Dendritic cell treated with granulocyte-macrophage colony-stimulating factor and Interleukin-4, amounts not matched to agents 40 ng/mL and 50 ng/mL, for 4 days (primary cell): ENCODE measurements at regions of chr9 and their contacts with region 1.

Region 1: DNA sequence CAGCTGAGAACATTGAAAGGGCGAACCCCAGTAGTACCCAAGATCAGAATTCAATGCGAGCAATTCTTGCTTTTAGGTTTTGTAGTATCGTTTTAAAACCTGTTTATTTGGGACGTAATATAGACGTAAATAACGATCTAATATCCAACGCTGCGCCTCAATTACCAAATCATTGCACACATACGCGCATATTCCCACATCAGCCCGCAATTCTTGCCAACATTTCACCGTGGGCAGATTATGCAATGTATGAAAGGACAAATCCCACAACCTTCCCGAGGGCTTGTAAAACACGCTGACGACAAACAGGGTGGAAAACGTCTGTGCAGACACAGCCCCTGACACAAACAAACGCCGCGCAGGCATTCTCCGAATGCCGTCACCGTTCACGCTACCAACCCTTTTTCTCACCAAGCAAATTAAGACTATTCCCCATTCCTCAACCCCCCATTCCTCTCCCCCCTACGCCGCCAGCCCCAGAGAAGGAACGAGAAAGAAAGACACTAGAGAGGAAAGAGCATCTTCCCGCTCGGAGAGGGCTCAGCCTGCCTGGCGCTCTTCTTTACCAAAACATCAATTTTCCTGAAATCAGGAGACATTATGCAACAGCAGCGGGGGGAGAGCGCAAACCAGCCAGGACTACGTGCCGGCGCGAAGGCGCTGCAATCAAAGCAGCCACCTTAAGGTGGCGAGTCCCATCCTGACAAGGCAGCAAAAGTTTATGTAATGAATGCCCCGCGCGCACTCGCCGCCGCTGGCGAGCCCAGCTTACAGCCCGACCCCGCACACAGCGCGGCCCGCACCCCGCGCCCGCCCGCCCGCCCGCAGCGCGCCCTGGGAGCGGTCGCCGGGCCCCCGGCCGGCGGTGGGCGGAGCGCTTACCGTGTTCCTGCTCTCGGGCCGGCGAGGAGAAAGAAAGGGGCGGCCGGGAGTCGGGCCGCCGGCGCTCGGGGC is 597 bp downstream of the NFIL3 start:
- H3K4me3 Mint-ChIP-seq: peak overlapping the region; percentile 92
- H3K27ac Mint-ChIP-seq: peak overlapping the region; percentile 96
- H3K4me1 Mint-ChIP-seq: peaks cover 50% of the 10 kb centered on the region
- H3K27me3 Mint-ChIP-seq: no peaks in the 10 kb centered on the region

Region 2: GRCh38 chr9:90914868-90915483 is 508.1 kb before region 1 on chr9:
- intact Hi-C with region 1: loop called (anchors 5 kb)
- H3K4me3 Mint-ChIP-seq: no peak overlapping the region
- H3K27ac Mint-ChIP-seq: no peak overlapping the region
- H3K4me1 Mint-ChIP-seq: peaks cover 11% of the 10 kb centered on the region
- H3K27me3 Mint-ChIP-seq: peaks cover 4% of the 10 kb centered on the region

Region 3: DNA sequence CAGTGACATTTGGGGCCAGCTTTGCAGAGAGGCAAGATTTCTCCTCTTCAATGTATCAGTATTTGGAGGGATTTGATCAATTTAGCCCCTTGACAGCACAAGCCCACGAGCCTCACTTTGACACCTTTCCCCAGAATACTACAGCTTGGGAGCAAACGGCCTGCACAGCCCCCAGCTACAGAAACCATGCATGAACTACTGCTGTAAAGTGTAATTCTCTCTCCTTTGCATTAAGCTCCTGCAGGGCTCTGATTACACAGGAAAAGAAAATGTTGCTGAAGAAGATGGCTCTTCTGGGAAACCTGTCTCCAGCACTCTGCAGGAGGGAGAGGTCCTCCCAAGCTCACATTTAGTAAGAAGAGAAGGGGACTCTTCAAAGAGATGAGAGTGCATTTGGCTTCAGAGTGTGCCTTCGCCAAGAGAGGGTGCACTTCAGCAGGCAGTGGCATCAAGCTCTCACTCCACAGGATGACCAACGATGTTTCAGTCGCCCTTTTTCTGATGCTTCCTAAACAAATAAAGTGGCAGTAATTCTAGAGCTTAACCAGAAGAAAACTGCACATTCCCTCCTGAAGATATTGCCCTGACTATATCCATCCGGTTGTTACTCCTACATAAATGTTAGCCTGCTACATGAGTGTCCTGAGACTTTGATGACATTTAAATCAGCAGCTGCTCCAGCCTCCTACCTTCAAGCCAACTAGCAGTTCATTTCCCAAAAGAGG is 333.5 kb before region 1 on chr9:
- intact Hi-C with region 1: loop called (anchors 2 kb)
- H3K4me3 Mint-ChIP-seq: no peak overlapping the region
- H3K27ac Mint-ChIP-seq: peak overlapping the region; percentile 57
- H3K4me1 Mint-ChIP-seq: peaks cover 47% of the 10 kb centered on the region
- H3K27me3 Mint-ChIP-seq: peaks cover 8% of the 10 kb centered on the region

Region 4: GRCh38 chr9:91193658-91194391 is 229.2 kb before region 1 on chr9:
- intact Hi-C with region 1: loop called (anchors 2 kb)
- H3K4me3 Mint-ChIP-seq: peak overlapping the region; percentile 71
- H3K27ac Mint-ChIP-seq: peak overlapping the region; percentile 100
- H3K4me1 Mint-ChIP-seq: peaks cover 82% of the 10 kb centered on the region
- H3K27me3 Mint-ChIP-seq: no peaks in the 10 kb centered on the region

Region 5: GRCh38 chr9:91361291-91362050 is 61.6 kb before region 1 on chr9 and contains the start of gene AUH:
- intact Hi-C with region 1: loop called (anchors 5 kb)
- H3K4me3 Mint-ChIP-seq: peak within 1 kb of the TSS; percentile 95
- H3K27ac Mint-ChIP-seq: peak within 1 kb of the TSS; percentile 96
- H3K4me1 Mint-ChIP-seq: peaks cover 44% of the 10 kb centered on the region
- H3K27me3 Mint-ChIP-seq: no peaks in the 10 kb centered on the region